Right lobe of liver (tissue), 6 donors: ENCODE measurements at regions of chr16 and their contacts with region 1.

Region 1: GRCh38 chr16:67672739-67673662 is 6.4 kb downstream of the C16orf86 start:
- DNase-seq: peak; percentile 78 to 79 (median 78)
- ATAC-seq: peak; percentile 46 to 51 (median 49)
- H3K4me3 ChIP-seq: no peak overlapping the region
- H3K27ac ChIP-seq: peak overlapping the region; percentile 84 to 92 (median 86)
- H3K4me1 ChIP-seq: peaks cover 0 to 68% (median 35%) of the 10 kb centered on the region in 4 donors
- H3K27me3 ChIP-seq: no peaks in the 10 kb centered on the region
- CTCF ChIP-seq: peak; percentile 73 to 84 (median 79)
- POLR2A ChIP-seq: no peak

Region 2: DNA sequence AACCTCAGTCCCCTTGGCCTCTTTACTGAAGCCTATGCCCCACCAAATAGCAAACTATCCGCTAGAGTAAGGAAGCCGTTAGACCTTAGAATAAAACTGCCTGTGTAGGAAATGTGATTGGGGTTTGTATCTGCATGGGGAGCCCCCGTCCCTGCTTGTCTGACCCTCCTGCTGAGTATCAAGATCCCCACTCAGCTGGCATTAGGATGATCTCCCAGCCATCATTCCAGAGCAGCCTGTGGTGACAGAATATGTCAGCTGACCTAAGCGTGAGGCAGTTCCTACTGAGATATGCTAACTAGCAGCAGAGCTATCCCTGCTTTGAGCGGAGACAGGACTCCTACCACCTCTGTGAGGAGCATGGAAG is 46.8 kb after region 1 on chr16:
- intact Hi-C with region 1: loop called (anchors 10 kb)
- DNase-seq: peak in 1 of 3 donors; percentile 56
- ATAC-seq: peak; percentile 61 to 77 (median 66)
- H3K4me3 ChIP-seq: peak overlapping the region; percentile 97 to 100 (median 98)
- H3K27ac ChIP-seq: peak overlapping the region; percentile 85 to 91 (median 85)
- H3K4me1 ChIP-seq: peaks cover 0 to 54% (median 20%) of the 10 kb centered on the region in 4 donors
- H3K27me3 ChIP-seq: no peaks in the 10 kb centered on the region
- CTCF ChIP-seq: no peak
- POLR2A ChIP-seq: no peak

Region 3: DNA sequence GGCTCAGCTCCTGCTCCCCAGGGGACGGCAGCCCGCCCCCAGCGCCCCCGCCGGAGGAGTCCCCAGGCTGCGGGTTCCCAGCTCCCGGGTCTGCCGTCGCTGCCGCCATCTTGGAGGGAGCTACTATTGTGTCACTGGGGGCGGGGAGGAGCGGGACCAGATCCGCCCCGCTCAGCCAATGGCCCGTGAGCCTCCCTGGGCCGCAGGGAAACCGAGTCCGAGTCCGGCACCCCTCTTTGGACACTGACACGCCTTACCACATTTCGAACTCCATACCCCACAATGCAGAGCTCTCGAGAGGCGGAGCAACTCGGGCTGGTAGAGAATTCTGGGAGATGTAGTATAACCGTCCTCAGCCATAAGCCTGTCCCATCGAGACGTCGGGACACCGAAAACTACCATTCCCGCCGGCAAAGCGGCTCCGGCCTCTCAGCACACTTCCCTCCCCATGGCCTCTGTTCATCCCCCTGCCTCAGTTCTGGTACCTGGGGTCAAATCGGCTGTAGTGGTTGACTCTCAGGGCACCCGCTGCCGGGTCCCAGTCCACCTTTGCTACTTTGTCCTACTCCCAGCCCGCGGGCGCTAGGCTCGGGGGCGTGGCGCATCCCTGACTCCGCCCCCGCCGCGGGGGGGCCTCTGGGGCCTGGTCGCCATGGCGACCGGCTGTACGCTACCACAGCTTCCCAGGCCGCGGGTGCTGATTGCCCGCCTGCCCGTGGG is 133.6 kb after region 1 on chr16 and contains the starts of genes RANBP10 and TSNAXIP1:
- intact Hi-C with region 1: loop called in 1 of 2 experiments (anchors 10 kb)
- DNase-seq: peak; percentile 96 to 98 (median 98)
- ATAC-seq: peak; percentile 91 to 97 (median 92)
- H3K4me3 ChIP-seq: peak within 1 kb of the TSS; percentile 91 to 98 (median 96)
- H3K27ac ChIP-seq: peak within 1 kb of the TSS; percentile 59 to 85 (median 76)
- H3K4me1 ChIP-seq: peaks cover 0 to 26% (median 6%) of the 10 kb centered on the region in 4 donors
- H3K27me3 ChIP-seq: no peaks in the 10 kb centered on the region
- CTCF ChIP-seq: no peak
- POLR2A ChIP-seq: peak; percentile 91
- total RNA-seq, gene RANBP10: 15.1 to 38.4 (median 22.7) TPM
- total RNA-seq, gene TSNAXIP1: 0.42 to 1.2 (median 0.99) TPM